ENCODE measurements at regions of chr19 and their contacts with region 1.

Region 1: DNA sequence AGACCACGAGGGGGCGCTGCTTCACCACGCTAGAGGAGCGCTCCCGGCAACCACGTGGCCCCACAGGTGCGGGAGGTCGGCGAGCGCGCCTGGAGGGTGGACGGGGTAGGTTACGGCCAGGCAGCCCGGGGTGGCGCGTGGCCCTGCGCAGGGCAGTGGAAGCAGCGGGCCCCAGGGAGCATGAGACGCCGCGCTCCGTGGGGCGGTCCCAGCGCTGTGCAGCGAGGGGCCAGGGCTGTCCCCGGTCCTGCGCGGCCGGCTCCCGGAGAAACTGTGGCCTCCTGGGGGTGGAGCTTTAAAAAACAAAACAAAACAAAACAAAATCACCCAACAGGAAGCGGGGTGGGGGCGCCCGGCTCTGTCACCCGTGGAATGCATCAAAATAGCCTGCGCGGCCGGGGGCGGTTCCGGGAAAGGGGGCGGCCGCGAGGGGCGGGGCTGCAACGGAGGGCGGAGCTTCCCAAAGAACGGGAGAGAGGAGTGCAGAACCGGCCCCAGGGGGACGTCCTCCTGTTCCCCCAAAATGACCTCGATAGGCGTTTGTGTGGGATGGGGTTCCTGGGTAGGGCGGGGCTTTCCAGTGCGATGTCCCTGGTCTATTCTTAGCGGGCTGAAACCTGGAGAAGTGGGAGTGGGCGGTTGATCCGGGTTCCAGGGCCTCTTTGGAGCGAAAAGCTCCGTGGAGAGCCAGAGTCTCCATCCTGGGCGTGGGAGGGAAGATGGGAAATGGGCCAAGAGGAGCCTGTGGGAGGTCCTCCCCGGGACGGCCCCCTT is 27.3 kb downstream of the NUMBL start:
- DNase-seq: peak; percentile 89 to 94 (median 90)
- H3K4me3 ChIP-seq: peak overlapping the region in 3 of 4 donors; percentile 32 to 69 (median 56)
- H3K27ac ChIP-seq: peak overlapping the region; percentile 64 to 89 (median 76)
- H3K4me1 ChIP-seq: peaks cover 6 to 12% of the 10 kb centered on the region in 2 donors
- H3K27me3 ChIP-seq: no peaks in the 10 kb centered on the region
- CTCF ChIP-seq: peak; percentile 92 to 99 (median 96)
- POLR2A ChIP-seq: peak in 1 of 2 donors; percentile 39

Region 2: GRCh38 chr19:40799558-40800326 is 136.6 kb after region 1 on chr19:
- intact Hi-C with region 1: loop called in 1 of 2 experiments (anchors 5 kb)
- DNase-seq: peak in 5 of 7 donors; percentile 50 to 71 (median 66)
- H3K4me3 ChIP-seq: peak overlapping the region in 3 of 4 donors; percentile 53 to 96 (median 87)
- H3K27ac ChIP-seq: peak overlapping the region; percentile 20 to 94 (median 89)
- H3K4me1 ChIP-seq: peaks cover 45 to 58% of the 10 kb centered on the region in 2 donors
- H3K27me3 ChIP-seq: no peaks in the 10 kb centered on the region
- CTCF ChIP-seq: no peak
- POLR2A ChIP-seq: no peak

Region 3: GRCh38 chr19:40806488-40807468 is 143.7 kb after region 1 on chr19:
- intact Hi-C with region 1: loop called (anchors 5 kb)
- DNase-seq: peak; percentile 68 to 94 (median 77)
- H3K4me3 ChIP-seq: no peak overlapping the region
- H3K27ac ChIP-seq: peak overlapping the region in 4 of 5 donors; percentile 22 to 94 (median 68)
- H3K4me1 ChIP-seq: peaks cover 39 to 74% of the 10 kb centered on the region in 2 donors
- H3K27me3 ChIP-seq: no peaks in the 10 kb centered on the region
- CTCF ChIP-seq: peak; percentile 23 to 76 (median 66)
- POLR2A ChIP-seq: no peak

Region 4: DNA sequence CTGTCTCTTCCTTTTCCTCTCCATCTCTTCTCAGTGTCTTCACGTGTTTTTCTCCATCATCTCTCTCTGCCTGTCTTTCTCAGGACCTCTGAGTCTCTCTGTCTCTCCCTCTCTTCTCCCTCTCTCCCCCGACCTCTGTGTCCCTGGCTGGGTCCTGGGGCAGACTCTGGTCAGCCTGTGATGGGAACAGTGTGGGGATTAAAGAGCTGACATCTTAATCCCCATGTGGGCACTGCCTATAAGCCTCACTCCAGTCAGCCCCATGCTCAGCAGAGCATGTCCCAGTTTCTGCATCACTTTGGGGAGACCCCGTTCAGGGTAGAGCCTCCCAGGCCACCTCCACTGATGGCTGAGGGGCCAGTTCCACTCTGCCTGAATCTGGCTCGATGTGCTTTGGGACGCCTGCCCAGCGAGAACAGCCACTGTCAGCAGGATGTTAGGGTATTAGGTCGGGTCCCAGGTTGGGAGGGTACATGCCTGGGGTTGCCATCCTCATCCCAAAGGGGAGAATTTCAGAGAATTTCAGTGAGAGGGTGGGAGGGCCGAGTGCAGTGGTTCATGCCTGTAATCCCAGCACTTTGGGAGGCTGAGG is 152.2 kb after region 1 on chr19:
- intact Hi-C with region 1: loop called in 1 of 2 experiments (anchors 5 kb)
- DNase-seq: peak in 2 of 7 donors; percentile 14 to 48
- H3K4me3 ChIP-seq: no peak overlapping the region
- H3K27ac ChIP-seq: no peak overlapping the region
- H3K4me1 ChIP-seq: peaks cover 15 to 27% of the 10 kb centered on the region in 2 donors
- H3K27me3 ChIP-seq: no peaks in the 10 kb centered on the region
- CTCF ChIP-seq: no peak
- POLR2A ChIP-seq: no peak

Region 5: DNA sequence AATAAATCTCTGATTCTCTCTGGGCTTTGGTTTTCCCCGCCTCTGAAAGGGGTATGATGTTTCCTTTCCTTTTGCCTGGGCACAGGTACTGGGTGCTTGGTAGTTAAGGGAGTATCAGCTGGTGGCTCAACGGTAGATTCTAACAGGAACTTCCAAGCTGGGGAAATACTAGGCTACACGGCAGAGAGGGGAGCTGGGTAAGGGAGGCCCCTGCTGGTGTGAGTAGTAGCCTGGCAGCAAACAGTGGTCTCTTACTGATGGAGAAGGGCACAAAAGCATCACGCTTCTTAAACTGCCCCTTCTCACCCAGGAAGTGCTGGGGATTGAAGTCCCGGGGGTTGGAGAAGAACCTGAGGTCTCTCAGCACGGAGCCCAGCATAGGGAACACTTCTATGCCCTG is 245.9 kb after region 1 on chr19:
- intact Hi-C with region 1: loop called in 1 of 2 experiments (anchors 5 kb)
- DNase-seq: peak in 3 of 7 donors; percentile 39 to 74 (median 63)
- H3K4me3 ChIP-seq: peak overlapping the region in 1 of 4 donors; percentile 22
- H3K27ac ChIP-seq: no peak overlapping the region
- H3K4me1 ChIP-seq: peaks cover 0 to 6% of the 10 kb centered on the region in 2 donors
- H3K27me3 ChIP-seq: no peaks in the 10 kb centered on the region
- CTCF ChIP-seq: peak in 4 of 6 experiments; percentile 18 to 44 (median 42)
- POLR2A ChIP-seq: no peak

Region 6: GRCh38 chr19:40962460-40962961 is 299.4 kb after region 1 on chr19:
- intact Hi-C with region 1: no loop called
- DNase-seq: peak in 3 of 7 donors; percentile 13 to 31 (median 18)
- H3K4me3 ChIP-seq: no peak overlapping the region
- H3K27ac ChIP-seq: no peak overlapping the region
- H3K4me1 ChIP-seq: peaks cover 6 to 13% of the 10 kb centered on the region in 2 donors
- H3K27me3 ChIP-seq: no peaks in the 10 kb centered on the region
- CTCF ChIP-seq: no peak
- POLR2A ChIP-seq: no peak

Region 7: DNA sequence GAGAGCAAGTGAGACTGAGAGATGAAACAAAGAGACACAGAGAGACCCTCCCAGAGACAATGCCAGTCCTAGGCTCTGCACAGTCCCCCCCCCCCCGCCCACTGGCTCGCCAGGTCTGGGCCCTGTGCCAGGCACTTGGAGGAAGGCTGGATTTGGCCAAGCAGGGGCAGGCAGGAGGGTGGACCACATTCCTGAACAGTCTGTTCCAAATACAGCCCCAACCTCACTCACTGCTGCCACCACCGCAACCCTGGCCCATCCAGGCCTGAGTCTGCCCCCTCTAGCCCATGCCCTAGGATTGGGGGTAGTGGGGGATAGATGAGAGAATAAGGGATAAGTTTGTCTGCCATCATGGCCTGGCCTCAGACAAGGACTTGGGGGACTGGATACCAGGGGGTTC is 470.2 kb after region 1 on chr19:
- intact Hi-C with region 1: loop called in 1 of 2 experiments (anchors 10 kb)
- DNase-seq: no peak
- H3K4me3 ChIP-seq: no peak overlapping the region
- H3K27ac ChIP-seq: no peak overlapping the region
- H3K4me1 ChIP-seq: no peaks in the 10 kb centered on the region
- H3K27me3 ChIP-seq: no peaks in the 10 kb centered on the region
- CTCF ChIP-seq: no peak
- POLR2A ChIP-seq: no peak